Right ventricle myocardium inferior (tissue), 1 donor: ENCODE measurements at regions of chr20 and their contacts with region 1.

Region 1: GRCh38 chr20:56392282-56393137 is at the start of gene CSTF1:
- DNase-seq: peak; percentile 100
- ATAC-seq: peak; percentile 99
- total RNA-seq, gene CSTF1: 18.6 TPM

Region 2: GRCh38 chr20:56358596-56359211 is 33.8 kb before region 1 on chr20 and contains the start of gene FAM210B:
- intact Hi-C with region 1: loop called (anchors 5 kb)
- DNase-seq: peak; percentile 94
- ATAC-seq: peak; percentile 99
- total RNA-seq, gene FAM210B: 60.3 TPM

Region 3: DNA sequence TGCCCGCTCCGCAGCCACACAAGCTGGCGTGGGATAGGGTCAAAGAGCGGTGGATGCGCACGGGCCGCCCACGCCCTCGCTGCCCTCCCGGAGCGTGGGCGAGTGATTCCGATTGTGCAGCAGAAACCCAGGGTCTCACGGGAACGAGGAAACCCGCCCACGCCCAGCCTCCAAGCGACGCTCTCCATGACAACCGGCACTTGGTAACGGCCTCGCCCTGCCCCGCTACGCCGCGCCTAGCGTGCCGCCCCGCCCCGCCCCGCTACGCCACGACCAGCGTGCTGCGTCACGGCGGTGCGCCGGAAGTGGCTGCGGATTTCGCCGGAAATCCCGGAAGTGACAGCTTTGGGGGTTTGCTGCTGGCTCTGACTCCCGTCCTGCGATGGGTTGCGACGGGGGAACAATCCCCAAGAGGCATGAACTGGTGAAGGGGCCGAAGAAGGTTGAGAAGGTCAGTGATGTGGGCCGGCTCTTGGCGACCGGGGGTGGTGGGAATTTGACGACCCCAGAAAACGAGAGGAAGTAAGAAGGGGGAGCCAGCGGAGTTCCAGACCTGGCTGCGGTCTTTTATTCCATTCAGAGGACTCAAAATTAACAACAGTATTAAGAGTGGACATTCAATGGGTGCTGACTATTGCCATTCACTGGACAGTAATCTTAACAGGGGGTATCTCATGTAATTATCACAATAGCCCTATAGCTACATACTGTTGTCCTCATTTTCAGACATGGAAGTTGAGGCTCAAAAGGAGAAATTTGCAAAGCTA is 76.0 kb after region 1 on chr20 and contains the start of gene RTF2:
- intact Hi-C with region 1: loop called (anchors 1 kb)
- DNase-seq: peak; percentile 96
- ATAC-seq: peak; percentile 99
- total RNA-seq, gene RTF2: 87.1 TPM